Body of pancreas (tissue), 4 donors: ENCODE measurements at regions of chr2 and their contacts with region 1.

Region 1: GRCh38 chr2:106542811-106543259 is 55.7 kb downstream of the CD8B2 start:
- DNase-seq: peak; percentile 66 to 75 (median 70)
- ATAC-seq: peak; percentile 91
- H3K4me3 ChIP-seq: no peak overlapping the region
- H3K27ac ChIP-seq: peak overlapping the region in 1 of 4 donors; percentile 29
- H3K4me1 ChIP-seq: peaks cover 4% of the 10 kb centered on the region
- H3K27me3 ChIP-seq: no peaks in the 10 kb centered on the region
- CTCF ChIP-seq: peak; percentile 75 to 90 (median 79)
- POLR2A ChIP-seq: no peak

Region 2: GRCh38 chr2:106104332-106105062 is 438.3 kb before region 1 on chr2:
- intact Hi-C with region 1: loop called (anchors 10 kb)
- DNase-seq: peak; percentile 69 to 75 (median 72)
- ATAC-seq: peak; percentile 62
- H3K4me3 ChIP-seq: no peak overlapping the region
- H3K27ac ChIP-seq: no peak overlapping the region
- H3K4me1 ChIP-seq: no peaks in the 10 kb centered on the region
- H3K27me3 ChIP-seq: no peaks in the 10 kb centered on the region
- CTCF ChIP-seq: peak; percentile 80 to 96 (median 93)
- POLR2A ChIP-seq: no peak

Region 3: DNA sequence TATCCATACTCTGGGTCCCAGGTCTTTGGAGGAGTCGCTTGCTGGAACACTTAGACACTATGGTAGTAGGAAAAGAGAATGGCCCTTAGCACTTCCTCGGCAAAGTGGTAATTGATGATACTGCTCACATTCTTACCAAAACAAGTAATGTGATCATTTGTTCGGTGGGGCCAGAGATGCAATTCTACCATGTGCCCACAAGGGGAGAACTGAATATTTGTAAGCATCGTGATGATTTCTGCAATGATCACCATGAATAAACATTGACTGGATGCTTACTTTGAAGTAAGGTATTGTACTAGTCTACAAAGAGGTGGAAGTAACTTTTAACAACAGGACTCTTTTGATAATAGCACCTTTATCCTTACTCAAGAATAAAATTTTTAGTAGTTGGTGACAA is 54.0 kb after region 1 on chr2:
- intact Hi-C with region 1: no loop called
- DNase-seq: no peak
- ATAC-seq: no peak
- H3K4me3 ChIP-seq: no peak overlapping the region
- H3K27ac ChIP-seq: no peak overlapping the region
- H3K4me1 ChIP-seq: peaks cover 7% of the 10 kb centered on the region
- H3K27me3 ChIP-seq: no peaks in the 10 kb centered on the region
- CTCF ChIP-seq: no peak
- POLR2A ChIP-seq: no peak